ENCODE measurements at regions of chr2 and their contacts with region 1.

Region 1: DNA sequence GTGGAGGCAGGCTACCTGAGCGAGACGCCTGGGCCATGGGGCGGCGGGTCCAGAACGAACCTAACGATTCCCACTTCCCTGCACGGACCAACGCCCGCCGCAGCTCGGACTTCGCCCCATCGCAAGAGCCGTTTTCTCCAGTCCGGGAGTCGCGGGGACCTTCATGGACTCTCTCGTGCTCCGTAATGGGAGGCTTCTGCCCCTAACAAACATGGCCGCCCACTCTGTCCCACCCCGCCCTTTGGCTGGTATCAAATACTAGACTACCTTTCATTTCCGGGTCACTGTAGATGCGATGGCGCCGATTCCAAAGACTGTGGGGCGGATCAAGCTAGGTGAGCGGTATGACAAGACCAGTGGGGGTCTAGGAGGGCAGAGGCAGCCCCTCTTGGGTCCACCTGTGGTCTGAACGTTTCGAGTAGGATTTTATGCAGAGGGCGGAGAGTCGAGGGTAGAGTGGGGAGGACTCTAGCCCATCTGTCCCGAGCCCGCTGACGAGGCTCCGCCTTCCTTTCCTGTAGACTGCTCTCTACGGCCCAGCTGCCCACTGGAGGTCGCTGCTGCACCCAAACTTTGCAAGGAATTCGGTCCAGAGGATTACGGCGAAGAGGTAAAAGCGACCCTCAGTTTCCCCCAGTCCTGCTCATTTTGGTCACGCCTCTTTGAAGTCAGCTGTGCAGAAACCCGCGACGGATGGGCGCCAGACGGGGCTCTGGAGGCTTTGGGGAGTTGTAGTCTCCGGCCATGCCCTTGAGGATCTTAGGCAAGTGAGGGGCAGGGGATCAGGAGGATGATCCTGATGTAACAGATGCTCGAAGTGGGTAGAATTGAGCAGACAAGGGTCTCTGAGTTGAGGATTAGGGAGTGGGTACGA is at the starts of genes CCDC142 and TTC31:
- DNase-seq: peak; percentile 74
- H3K4me3 ChIP-seq: peak within 1 kb of the TSS; percentile 91
- H3K27me3 ChIP-seq: no peaks in the 10 kb centered on the region
- CTCF ChIP-seq: peak; percentile 92
- polyA plus RNA-seq, gene CCDC142: 4.5 and 6.2 TPM in 2 replicates
- polyA plus RNA-seq, gene TTC31: 19.4 and 26.0 TPM in 2 replicates

Region 2: DNA sequence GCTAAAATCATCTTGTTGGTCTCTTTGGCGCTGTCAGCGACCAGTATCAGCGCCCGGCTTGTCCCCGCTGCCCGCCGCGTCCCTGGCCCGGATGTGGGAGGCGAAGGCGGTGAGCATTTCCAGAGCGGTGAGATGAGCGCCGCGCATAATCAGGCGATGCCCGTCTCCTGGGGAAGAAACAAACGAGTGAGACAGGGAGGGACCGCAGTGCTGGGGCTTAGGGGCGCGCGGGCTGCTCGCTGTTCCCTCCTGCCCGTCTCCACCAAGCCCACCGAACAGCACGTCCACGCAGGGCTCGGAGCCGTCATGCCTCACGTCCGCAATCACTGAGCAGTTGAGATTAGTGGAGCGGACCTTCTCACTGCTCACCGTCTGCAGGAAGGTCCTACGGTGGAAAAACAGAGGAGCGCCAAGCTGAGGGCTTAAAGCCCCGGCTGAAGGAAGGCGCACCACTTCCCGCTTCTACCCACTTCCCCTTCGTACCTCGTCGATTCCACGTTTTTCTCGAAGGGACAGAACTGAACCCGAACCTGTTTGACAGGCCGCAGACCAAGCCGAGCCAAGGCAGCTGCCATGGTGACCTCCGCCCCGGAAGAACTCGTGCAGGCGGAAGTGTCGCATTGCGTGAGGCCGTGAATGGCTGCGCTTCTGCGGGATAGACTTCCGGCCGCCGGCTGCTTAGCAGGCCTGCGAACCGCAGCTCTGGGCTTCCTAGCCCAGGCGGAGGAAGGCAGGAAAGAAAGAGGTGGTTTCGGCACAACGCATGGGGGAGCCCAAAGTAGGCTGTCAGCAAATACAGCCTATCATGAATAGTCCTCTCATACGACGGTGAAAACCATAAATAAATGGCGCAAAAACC is 10.7 kb before region 1 on chr2 and contains the start of gene MRPL53:
- CTCF ChIA-PET with region 1: interaction called, 10 read pairs
- POLR2A ChIA-PET with region 1: interaction called, 5 read pairs
- DNase-seq: peak; percentile 49
- H3K4me3 ChIP-seq: peak within 1 kb of the TSS; percentile 76
- H3K27me3 ChIP-seq: no peaks in the 10 kb centered on the region
- CTCF ChIP-seq: no peak
- polyA plus RNA-seq, gene MRPL53: 38.9 and 41.2 TPM in 2 replicates

Region 3: DNA sequence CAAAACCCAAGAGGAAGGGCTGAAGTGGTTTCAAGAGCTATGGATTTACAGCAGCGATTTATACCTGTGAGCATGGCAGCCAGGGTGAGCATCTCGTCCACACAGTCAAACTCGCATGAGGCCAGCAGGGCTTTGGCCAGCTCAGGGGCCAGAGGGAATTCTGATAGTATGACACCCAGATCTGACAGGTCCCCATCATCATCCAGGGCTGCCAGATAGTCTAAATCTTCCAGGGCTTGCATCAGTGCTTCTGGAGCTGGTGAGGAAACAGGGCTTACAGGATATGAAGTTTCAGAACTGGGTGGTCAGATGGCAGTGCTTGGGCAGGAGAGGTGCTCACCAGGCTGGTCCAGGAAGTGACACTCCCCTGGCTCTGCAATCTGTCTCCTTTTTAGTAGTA is 39.5 kb after region 1 on chr2:
- CTCF ChIA-PET with region 1: interaction called, 10 read pairs
- POLR2A ChIA-PET with region 1: no interaction called
- DNase-seq: no peak
- H3K4me3 ChIP-seq: no peak overlapping the region
- H3K27me3 ChIP-seq: peaks cover 28% of the 10 kb centered on the region
- CTCF ChIP-seq: no peak

Region 4: GRCh38 chr2:74576863-74577229 is 93.8 kb after region 1 on chr2:
- CTCF ChIA-PET with region 1: interaction called, 149 read pairs
- POLR2A ChIA-PET with region 1: no interaction called
- DNase-seq: peak; percentile 83
- H3K4me3 ChIP-seq: no peak overlapping the region
- H3K27me3 ChIP-seq: no peaks in the 10 kb centered on the region
- CTCF ChIP-seq: peak; percentile 40